Left cardiac atrium (tissue), 4 donors: ENCODE measurements at regions of chr20 and their contacts with region 1.

Region 1: GRCh38 chr20:64119681-64120341 is 12.4 kb upstream of the NPBWR2 start:
- DNase-seq: peak; percentile 21
- ATAC-seq: peak in 1 of 2 donors; percentile 23

Region 2: GRCh38 chr20:64039293-64040160 is 80.3 kb before region 1 on chr20:
- intact Hi-C with region 1: loop called in 1 of 2 experiments (anchors 2 kb)
- DNase-seq: no peak
- ATAC-seq: peak in 1 of 2 donors; percentile 47

Region 3: GRCh38 chr20:64083378-64083803 is 36.4 kb before region 1 on chr20:
- intact Hi-C with region 1: loop called in 1 of 2 experiments (anchors 1 kb)
- DNase-seq: peak; percentile 84
- ATAC-seq: peak; percentile 64 to 68

Region 4: DNA sequence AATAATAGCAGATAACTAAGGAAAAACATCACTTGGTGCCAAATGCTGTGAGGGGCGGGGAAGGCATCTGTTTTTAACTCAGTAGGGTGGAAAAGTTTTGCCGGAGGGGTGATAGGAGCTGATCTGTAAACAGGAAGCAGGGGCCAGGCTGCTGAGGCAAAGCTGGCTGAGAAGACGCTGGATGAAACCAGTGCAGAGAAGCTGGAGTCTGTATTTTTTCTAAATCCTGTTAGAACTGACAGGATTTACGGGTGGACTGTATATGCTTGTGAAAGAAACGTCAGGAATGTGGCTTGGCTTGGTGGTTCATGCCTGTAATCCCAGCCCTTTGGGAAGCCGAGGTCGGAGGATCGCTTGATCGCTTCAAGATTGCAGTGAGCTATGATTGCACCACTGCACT is 141.3 kb after region 1 on chr20:
- intact Hi-C with region 1: no loop called
- DNase-seq: peak; percentile 56
- ATAC-seq: peak; percentile 53 to 62